OCI-LY7 (cell line): ENCODE measurements at regions of chr7 and their contacts with region 1.

Region 1: GRCh38 chr7:104923010-104923421 is 91.0 kb upstream of the KMT2E start:
- DNase-seq: peak; percentile 92
- H3K4me3 ChIP-seq: no peak overlapping the region
- H3K27ac ChIP-seq: no peak overlapping the region
- H3K4me1 ChIP-seq: peaks cover 11% of the 10 kb centered on the region
- CTCF ChIP-seq: peak; percentile 97

Region 2: GRCh38 chr7:104231054-104232046 is 691.7 kb before region 1 on chr7:
- CTCF ChIA-PET with region 1: no interaction called
- POLR2A ChIA-PET with region 1: no interaction called
- intact Hi-C with region 1: loop called (anchors 5 kb)
- DNase-seq: peak; percentile 61
- H3K4me3 ChIP-seq: no peak overlapping the region
- H3K27ac ChIP-seq: no peak overlapping the region
- H3K4me1 ChIP-seq: no peaks in the 10 kb centered on the region
- CTCF ChIP-seq: peak; percentile 82

Region 3: DNA sequence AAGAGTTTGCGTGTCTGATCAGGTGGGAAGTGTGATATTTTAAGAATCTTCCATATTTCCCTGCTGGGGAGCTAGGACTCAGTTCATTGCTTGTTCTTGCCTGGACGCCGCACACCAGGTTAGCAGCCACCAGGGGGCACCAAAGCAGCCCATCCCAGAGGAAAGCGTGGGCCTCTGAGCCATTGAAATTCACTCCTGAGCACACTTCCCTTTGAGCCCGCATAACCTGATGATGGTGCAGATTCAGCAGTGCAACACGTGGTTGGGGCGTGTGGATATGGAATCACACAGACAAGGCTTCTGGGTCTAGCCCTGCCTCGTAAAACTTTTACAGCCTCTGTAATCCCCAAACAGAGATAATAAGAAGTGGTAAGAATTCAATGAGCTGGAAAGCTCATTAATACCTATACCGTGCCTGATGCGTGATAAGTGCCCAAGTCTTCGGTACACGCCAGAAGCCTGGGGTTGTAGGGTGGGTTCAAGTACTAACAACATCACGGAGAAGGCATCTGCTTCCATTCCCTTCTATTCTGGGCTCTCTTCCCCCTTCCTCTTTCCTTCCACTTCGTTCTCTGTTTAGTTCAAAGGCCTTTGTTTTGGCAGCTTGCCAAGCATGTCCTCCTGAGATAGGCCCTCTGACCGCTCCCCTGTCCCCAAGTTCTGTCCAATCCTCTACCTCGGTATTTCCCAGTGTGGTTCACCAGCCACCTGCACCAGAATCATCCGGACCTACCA is 39.1 kb before region 1 on chr7:
- CTCF ChIA-PET with region 1: interaction called, 10 read pairs
- POLR2A ChIA-PET with region 1: interaction called, 5 read pairs
- intact Hi-C with region 1: loop called (anchors 1 kb)
- DNase-seq: peak; percentile 72
- H3K4me3 ChIP-seq: no peak overlapping the region
- H3K27ac ChIP-seq: no peak overlapping the region
- H3K4me1 ChIP-seq: peaks cover 5% of the 10 kb centered on the region
- CTCF ChIP-seq: peak; percentile 97

Region 4: DNA sequence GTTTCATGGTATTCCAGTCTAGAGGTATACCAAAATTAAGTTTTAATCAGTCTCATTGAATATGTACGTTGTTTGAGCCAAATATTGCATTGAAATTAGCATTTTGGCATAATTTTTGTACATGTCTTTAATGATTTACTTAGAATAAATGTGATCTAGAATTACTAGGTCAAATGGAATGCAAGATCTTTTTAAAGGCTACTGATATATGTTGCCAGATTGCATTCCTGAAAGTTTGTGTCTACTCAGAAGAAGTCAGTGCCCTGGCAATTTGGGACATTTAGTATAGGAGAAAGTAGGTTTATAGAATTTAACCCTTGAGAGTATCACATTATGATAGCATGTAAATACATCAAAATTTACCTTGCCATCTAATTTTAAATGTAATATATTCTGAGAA is 123.4 kb after region 1 on chr7:
- CTCF ChIA-PET with region 1: no interaction called
- POLR2A ChIA-PET with region 1: interaction called, 4 read pairs
- intact Hi-C with region 1: loop called (anchors 1 kb)
- DNase-seq: no peak
- H3K4me3 ChIP-seq: no peak overlapping the region
- H3K27ac ChIP-seq: no peak overlapping the region
- H3K4me1 ChIP-seq: no peaks in the 10 kb centered on the region
- CTCF ChIP-seq: no peak

Region 5: DNA sequence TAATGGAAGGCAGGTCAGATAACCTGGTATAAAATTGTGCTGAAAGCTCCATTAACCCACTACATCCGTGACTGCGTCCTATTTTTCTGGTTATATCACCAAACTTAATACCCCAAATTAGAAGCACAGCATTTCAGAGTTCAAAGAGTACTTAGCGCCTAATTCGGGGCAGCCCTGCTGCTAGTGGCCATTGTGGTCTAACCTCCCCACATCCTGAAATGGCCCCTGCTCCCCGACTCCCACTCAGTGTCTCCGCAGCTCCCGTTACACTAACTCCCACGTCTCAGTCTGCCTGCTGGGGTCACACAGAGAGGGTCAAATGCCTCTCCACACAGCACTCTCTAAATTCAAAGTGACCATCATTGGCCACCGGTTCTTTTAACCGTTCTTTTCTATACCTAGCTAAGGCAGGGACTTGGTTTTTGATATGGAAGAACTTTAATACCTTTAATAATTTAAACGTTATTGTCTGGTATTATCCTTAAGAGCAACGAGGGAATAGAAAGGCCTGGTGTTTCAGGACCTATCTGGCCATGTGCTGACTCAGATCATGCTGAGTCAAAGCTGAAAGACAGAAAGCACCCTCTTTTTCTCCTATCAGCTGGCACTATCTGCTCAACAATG is 208.1 kb after region 1 on chr7:
- CTCF ChIA-PET with region 1: no interaction called
- POLR2A ChIA-PET with region 1: no interaction called
- intact Hi-C with region 1: no loop called
- DNase-seq: no peak
- H3K4me3 ChIP-seq: no peak overlapping the region
- H3K27ac ChIP-seq: no peak overlapping the region
- H3K4me1 ChIP-seq: no peaks in the 10 kb centered on the region
- CTCF ChIP-seq: no peak

Region 6: DNA sequence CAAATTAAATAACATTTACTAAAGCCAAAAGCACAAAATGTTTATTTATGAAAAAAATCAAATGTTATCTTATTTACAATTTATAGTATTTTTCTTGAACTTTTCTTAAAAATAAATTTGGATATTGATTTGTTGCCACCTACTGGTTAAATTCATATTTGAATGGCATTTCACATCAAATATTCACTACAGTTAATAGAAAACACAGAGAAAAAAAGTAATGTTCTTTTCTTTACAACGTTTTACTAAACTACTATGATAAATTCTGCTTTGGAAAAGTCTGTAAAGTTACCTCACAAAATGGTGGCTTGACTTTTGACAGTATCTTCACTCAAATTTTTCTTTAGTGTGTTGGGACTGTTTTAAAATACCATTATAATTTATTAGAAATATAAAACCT is 413.0 kb after region 1 on chr7:
- CTCF ChIA-PET with region 1: no interaction called
- POLR2A ChIA-PET with region 1: no interaction called
- intact Hi-C with region 1: loop called (anchors 2 kb)
- DNase-seq: peak; percentile 10
- H3K4me3 ChIP-seq: no peak overlapping the region
- H3K27ac ChIP-seq: no peak overlapping the region
- H3K4me1 ChIP-seq: no peaks in the 10 kb centered on the region
- CTCF ChIP-seq: peak; percentile 76

Region 7: GRCh38 chr7:105589356-105590077 is 666.5 kb after region 1 on chr7:
- CTCF ChIA-PET with region 1: interaction called, 3 read pairs
- POLR2A ChIA-PET with region 1: no interaction called
- intact Hi-C with region 1: loop called (anchors 2 kb)
- DNase-seq: peak; percentile 78
- H3K4me3 ChIP-seq: no peak overlapping the region
- H3K27ac ChIP-seq: no peak overlapping the region
- H3K4me1 ChIP-seq: peaks cover 6% of the 10 kb centered on the region
- CTCF ChIP-seq: peak; percentile 90